ENCODE measurements at regions of chr10 and their contacts with region 1.

Region 1: GRCh38 chr10:114173921-114174694 is at the start of gene CCDC186:
- DNase-seq: peak; percentile 99
- H3K4me3 Mint-ChIP-seq: peak within 1 kb of the TSS; percentile 100
- H3K27ac Mint-ChIP-seq: peak within 1 kb of the TSS; percentile 97
- H3K4me1 Mint-ChIP-seq: peaks cover 22% of the 10 kb centered on the region
- H3K27me3 Mint-ChIP-seq: peaks cover 23% of the 10 kb centered on the region
- total RNA-seq, gene CCDC186: 9.0 and 9.4 TPM in 2 replicates

Region 2: GRCh38 chr10:113678690-113679462 is 495.2 kb before region 1 on chr10:
- intact Hi-C with region 1: loop called (anchors 2 kb)
- DNase-seq: peak; percentile 92
- H3K4me3 Mint-ChIP-seq: peak overlapping the region; percentile 89
- H3K27ac Mint-ChIP-seq: peak overlapping the region; percentile 89
- H3K4me1 Mint-ChIP-seq: peaks cover 37% of the 10 kb centered on the region
- H3K27me3 Mint-ChIP-seq: peaks cover 9% of the 10 kb centered on the region

Region 3: GRCh38 chr10:113958631-113959382 is 215.3 kb before region 1 on chr10:
- intact Hi-C with region 1: loop called (anchors 2 kb)
- DNase-seq: no peak
- H3K4me3 Mint-ChIP-seq: no peak overlapping the region
- H3K27ac Mint-ChIP-seq: no peak overlapping the region
- H3K4me1 Mint-ChIP-seq: peaks cover 40% of the 10 kb centered on the region
- H3K27me3 Mint-ChIP-seq: peaks cover 20% of the 10 kb centered on the region

Region 4: DNA sequence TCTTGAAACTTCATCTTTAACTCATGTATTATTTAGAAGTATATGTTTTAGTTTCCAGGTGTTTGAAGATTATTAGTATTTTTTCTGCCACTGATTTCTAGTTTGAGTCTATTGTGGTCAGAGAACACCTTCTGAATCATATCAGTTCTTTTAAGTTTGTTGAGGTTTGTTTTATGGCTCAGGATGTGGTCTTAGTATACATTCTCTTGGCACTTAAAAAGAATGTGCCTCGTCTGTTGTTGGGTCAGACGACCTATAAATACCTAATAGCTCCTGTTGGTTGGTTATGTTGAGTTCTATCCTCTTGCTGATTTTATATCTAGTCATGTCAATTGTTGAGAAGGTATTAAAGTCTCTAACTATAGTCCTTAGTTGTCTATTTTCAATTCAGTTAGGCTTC is 21.0 kb after region 1 on chr10:
- intact Hi-C with region 1: loop called (anchors 1 kb)
- DNase-seq: no peak
- H3K4me3 Mint-ChIP-seq: no peak overlapping the region
- H3K27ac Mint-ChIP-seq: no peak overlapping the region
- H3K4me1 Mint-ChIP-seq: peaks cover 6% of the 10 kb centered on the region
- H3K27me3 Mint-ChIP-seq: peaks cover 45% of the 10 kb centered on the region

Region 5: DNA sequence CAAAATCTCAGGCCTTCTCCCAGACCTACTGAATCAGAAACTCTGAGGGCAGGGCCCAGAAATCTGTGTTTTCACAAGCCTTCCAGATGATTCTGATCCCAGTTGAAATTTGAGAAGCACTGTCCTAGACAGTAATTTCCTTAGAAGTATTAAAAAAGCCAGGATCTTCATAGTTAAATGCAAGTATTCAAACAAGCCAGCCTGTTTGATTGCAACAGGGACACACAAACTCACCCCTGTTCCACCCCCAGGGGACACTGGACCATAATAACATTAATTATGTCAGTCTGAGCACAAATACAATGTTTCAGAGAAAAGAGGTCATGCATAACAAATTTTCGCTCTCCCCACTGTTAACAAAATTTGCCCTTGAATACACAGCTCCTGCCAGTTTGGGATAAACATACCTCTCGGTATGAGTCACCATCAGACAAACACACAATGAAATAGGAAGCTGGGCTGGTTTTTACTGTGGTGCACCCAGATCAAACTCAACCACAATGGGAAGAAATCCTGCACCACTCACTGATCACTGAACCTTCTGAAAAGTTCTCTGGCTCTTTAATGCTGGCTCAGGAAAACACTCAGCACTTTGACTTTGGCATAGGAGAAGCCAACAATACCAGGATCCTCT is 449.7 kb after region 1 on chr10:
- intact Hi-C with region 1: loop called (anchors 10 kb)
- DNase-seq: no peak
- H3K4me3 Mint-ChIP-seq: no peak overlapping the region
- H3K27ac Mint-ChIP-seq: no peak overlapping the region
- H3K4me1 Mint-ChIP-seq: peaks cover 10% of the 10 kb centered on the region
- H3K27me3 Mint-ChIP-seq: peaks cover 11% of the 10 kb centered on the region

Region 6: DNA sequence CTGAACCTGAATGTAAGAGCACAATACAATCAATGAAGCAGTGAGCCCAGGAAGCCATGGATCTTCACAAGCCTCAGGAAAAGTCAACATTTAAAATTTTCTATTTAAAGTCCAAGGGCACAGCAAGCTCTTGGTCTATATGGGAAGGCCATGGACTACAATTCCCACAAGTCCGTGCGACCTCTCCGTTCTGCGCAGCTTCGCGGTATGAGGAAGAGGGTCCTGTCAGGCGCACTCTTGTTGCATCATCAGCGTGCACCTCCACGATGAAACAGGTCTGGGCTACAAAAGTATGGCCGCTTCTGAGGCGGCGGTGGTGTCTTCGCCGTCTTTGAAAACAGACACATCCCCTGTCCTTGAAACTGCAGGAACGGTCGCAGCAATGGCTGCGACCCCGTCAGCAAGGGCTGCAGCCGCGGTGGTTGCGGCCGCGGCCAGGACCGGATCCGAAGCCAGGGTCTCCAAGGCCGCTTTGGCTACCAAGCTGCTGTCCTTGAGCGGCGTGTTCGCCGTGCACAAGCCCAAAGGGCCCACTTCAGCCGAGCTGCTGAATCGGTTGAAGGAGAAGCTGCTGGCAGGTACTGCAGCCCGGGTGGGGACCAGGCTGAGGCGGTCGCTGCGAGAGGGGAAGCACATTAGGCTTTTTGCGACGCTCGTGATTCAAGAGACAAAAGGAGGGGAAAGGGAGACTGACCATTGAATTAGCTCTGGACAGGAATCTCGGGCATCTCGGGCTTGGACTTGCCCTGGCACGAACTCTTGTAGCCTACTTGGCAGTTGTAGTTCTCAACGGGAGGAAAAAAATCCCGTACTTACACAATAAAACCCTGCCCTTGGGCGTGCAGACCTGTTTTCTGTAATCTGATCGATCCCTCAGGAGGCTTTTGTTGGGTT is 764.1 kb after region 1 on chr10 and contains the start of gene TRUB1:
- intact Hi-C with region 1: loop called (anchors 10 kb)
- DNase-seq: peak; percentile 96
- H3K4me3 Mint-ChIP-seq: peak within 1 kb of the TSS; percentile 94
- H3K27ac Mint-ChIP-seq: peak within 1 kb of the TSS; percentile 94
- H3K4me1 Mint-ChIP-seq: peaks cover 31% of the 10 kb centered on the region
- H3K27me3 Mint-ChIP-seq: no peaks in the 10 kb centered on the region
- total RNA-seq, gene TRUB1: 18.5 and 20.9 TPM in 2 replicates